Activated CD8-positive, alpha-beta T cell treated with anti-CD3 and anti-CD28 coated beads for 36 hours (primary cell): ENCODE measurements at regions of chr7 and their contacts with region 1.

Region 1: GRCh38 chr7:100119062-100119700 is at the starts of genes CNPY4 and TAF6:
- DNase-seq: peak; percentile 95
- ATAC-seq: peak; percentile 78
- H3K4me3 Mint-ChIP-seq: peak within 1 kb of the TSS; percentile 89
- H3K27ac Mint-ChIP-seq: peak within 1 kb of the TSS; percentile 89
- H3K4me1 Mint-ChIP-seq: peaks cover 18% of the 10 kb centered on the region
- H3K27me3 Mint-ChIP-seq: no peaks in the 10 kb centered on the region
- CTCF ChIP-seq: no peak
- total RNA-seq, gene CNPY4: 9.8 to 10.4 TPM
- total RNA-seq, gene TAF6: 48.6 to 55.3 TPM

Region 2: DNA sequence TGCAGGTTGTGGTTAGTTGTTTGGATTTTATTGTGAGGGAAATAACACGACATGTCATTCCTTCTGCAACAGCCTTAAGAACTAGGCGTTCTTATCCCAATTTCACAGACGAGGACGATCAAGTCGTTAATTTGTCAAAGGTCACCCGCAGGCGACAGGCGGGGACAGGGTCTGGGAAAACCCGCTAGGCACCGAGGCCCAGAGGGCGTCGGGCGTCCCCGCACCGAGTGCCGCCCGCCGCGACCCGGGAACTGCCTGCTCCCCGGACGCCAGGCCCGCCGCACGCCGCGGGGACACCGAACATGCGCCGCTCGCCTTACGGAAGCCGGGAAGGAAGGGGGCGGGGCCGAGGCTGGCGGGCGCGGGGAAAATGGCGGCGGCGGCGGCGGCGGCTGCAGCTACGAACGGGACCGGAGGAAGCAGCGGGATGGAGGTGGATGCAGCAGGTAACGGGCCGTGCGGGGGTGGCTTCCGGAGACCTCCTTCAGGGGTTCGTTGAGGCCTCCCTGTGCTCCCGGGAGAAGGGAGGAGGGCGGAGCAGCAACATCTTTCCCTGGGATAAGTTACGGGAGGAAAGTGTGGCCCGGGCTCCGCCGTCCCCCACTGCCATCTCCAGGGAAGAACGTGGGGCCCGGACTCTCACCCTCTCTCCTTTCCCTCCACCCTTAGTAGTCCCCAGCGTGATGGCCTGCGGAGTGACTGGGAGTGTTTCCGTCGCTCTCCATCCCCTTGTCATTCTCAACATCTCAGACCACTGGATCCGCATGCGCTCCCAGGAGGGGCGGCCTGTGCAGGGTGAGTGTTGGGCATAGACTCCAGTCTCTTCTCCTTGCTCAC is 30.3 kb before region 1 on chr7 and contains the start of gene COPS6:
- CTCF ChIA-PET with region 1: no interaction called
- POLR2A ChIA-PET with region 1: interaction called, 14 read pairs
- intact Hi-C with region 1: no loop called
- DNase-seq: peak; percentile 88
- ATAC-seq: peak; percentile 72
- H3K4me3 Mint-ChIP-seq: peak within 1 kb of the TSS; percentile 95
- H3K27ac Mint-ChIP-seq: peak within 1 kb of the TSS; percentile 97
- H3K4me1 Mint-ChIP-seq: peaks cover 25% of the 10 kb centered on the region
- H3K27me3 Mint-ChIP-seq: no peaks in the 10 kb centered on the region
- CTCF ChIP-seq: no peak
- total RNA-seq, gene COPS6: 81.3 to 86.3 TPM

Region 3: GRCh38 chr7:100148559-100149350 is 29.6 kb after region 1 on chr7 and contains the start of gene LAMTOR4:
- CTCF ChIA-PET with region 1: no interaction called
- POLR2A ChIA-PET with region 1: no interaction called
- intact Hi-C with region 1: no loop called
- DNase-seq: peak; percentile 99
- ATAC-seq: peak; percentile 98
- H3K4me3 Mint-ChIP-seq: peak within 1 kb of the TSS; percentile 99
- H3K27ac Mint-ChIP-seq: peak within 1 kb of the TSS; percentile 99
- H3K4me1 Mint-ChIP-seq: peaks cover 26% of the 10 kb centered on the region
- H3K27me3 Mint-ChIP-seq: no peaks in the 10 kb centered on the region
- CTCF ChIP-seq: no peak
- total RNA-seq, gene LAMTOR4: 108 to 116 TPM